Heart left ventricle (tissue), 16 donors: ENCODE measurements at regions of chr11 and their contacts with region 1.

Region 1: DNA sequence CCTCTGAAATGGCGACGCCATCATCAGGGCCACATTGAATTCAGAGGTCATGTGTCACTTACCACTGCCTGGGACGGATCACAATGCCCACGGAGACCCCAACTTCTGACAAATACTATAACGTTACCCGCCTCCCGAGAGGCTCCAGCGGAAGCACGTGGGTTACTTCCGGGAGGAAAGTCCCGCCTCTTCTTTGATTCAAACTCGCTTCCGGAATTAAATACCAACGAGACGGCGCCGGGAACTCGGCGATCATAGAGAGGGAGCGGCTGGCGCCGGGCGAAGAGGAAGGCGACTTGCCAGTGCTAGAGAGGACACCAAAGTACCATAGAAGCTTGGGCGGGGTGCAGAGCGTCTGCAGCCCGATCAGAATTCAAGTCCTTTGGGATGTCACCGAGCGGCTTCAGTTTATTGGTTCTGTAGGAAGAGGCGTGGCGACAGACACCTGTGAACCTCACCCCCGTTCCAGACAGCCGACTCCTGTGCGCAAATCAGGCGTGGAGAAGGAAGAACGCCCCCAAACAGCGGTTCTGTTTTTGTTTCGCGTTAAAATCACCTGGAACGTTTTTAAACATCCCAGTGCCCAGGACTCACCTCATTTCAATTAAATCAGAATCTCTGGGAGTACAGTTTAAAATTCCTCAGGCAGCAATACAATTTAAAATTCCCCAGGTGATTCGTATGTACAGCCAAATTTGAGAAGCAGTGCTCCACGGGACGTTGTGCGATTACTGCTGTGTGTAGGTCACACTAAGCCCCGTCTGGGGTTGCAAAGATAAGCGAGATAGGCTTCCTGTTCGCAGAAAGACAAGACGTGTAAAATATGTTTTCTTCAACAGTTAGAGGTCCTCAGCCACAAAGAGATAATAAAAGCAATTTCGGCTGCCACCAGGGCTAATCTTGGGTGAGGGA is at the start of gene TIMM10:
- DNase-seq: peak; percentile 94 to 97 (median 96)
- ATAC-seq: peak; percentile 97 to 99 (median 98)
- H3K4me3 ChIP-seq: peak within 1 kb of the TSS; percentile 55 to 91 (median 72)
- H3K27ac ChIP-seq: peak within 1 kb of the TSS in 11 of 12 donors; percentile 39 to 81 (median 73)
- H3K4me1 ChIP-seq: peaks cover 0 to 21% (median 11%) of the 10 kb centered on the region in 12 donors
- H3K27me3 ChIP-seq: no peaks in the 10 kb centered on the region
- CTCF ChIP-seq: no peak
- POLR2A ChIP-seq: peak in 1 of 2 donors; percentile 25
- total RNA-seq, gene TIMM10: 36.6 to 81.5 (median 46.4) TPM

Region 2: GRCh38 chr11:57335343-57336110 is 195.3 kb before region 1 on chr11 and contains the start of gene SSRP1:
- intact Hi-C with region 1: loop called in 2 of 10 experiments (anchors 5 kb)
- DNase-seq: peak; percentile 89 to 94 (median 93)
- ATAC-seq: peak; percentile 98 to 99 (median 98)
- H3K4me3 ChIP-seq: peak within 1 kb of the TSS; percentile 62 to 94 (median 84)
- H3K27ac ChIP-seq: peak within 1 kb of the TSS; percentile 70 to 96 (median 84)
- H3K4me1 ChIP-seq: peaks cover 0 to 25% (median 16%) of the 10 kb centered on the region in 12 donors
- H3K27me3 ChIP-seq: no peaks in the 10 kb centered on the region
- CTCF ChIP-seq: peak in 1 of 12 donors; percentile 24
- POLR2A ChIP-seq: peak in 1 of 2 donors; percentile 36
- total RNA-seq, gene SSRP1: 31.8 to 60.4 (median 41.6) TPM

Region 3: DNA sequence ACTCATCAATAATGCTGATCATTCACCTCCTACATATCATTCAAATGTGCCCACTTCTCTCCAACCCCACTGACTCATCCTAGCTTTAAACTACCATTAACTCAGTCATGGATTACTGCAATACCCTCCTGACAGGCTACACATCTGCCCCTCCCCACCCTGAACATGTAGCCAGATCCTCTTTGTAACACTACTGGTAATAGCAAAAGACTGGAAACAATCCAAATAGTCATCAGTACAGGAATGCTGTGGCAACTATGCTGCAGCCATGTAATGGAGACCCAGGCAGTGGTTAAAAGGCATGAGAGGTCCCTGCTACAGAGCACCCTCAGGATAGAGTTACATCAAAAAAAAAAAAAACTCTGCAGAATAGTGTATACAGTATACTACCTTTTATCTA is 120.6 kb before region 1 on chr11:
- intact Hi-C with region 1: no loop called
- DNase-seq: no peak
- ATAC-seq: no peak
- H3K4me3 ChIP-seq: no peak overlapping the region
- H3K27ac ChIP-seq: no peak overlapping the region
- H3K4me1 ChIP-seq: peaks cover 4 to 39% (median 28%) of the 10 kb centered on the region in 12 donors
- H3K27me3 ChIP-seq: no peaks in the 10 kb centered on the region
- CTCF ChIP-seq: no peak
- POLR2A ChIP-seq: no peak

Region 4: DNA sequence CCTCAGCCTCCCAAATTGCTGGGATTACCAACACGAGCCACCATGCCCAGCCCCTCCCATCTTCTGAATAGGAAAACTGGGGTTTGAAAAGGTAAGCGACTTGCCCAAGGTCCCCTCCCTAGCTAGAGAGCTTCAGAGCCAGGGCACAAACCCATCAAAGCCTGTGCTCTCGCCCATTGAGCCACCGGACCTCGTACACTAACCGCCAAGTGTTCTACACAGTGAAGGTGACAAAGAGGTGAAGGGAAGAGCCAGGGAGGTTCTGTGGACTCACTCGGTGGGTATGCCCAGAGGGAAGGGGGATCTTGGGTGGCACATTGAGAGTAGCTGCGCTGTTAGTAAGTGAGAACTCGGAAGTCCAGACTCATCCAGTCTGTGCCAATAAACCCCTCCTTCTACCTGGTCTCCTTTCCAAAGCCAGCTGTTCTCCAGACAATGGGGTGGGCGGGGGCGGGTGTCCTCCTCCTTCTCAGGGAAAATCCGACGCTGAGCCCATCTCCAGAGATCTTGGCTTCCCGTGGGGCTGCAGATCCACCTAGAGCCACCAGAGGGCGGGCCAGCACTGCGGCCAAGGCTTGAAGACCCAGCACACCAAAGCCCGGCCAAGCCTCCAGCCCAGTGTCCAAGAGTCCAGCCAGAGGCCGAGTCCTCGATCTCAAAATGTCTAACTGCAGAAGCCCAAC is 73.8 kb before region 1 on chr11:
- intact Hi-C with region 1: loop called in 9 of 10 experiments (anchors 1 to 5 kb)
- DNase-seq: peak; percentile 87 to 95 (median 89)
- ATAC-seq: peak; percentile 57 to 89 (median 86)
- H3K4me3 ChIP-seq: peak overlapping the region in 2 of 12 donors; percentile 4 to 19
- H3K27ac ChIP-seq: no peak overlapping the region
- H3K4me1 ChIP-seq: peaks cover 3 to 43% (median 25%) of the 10 kb centered on the region in 12 donors
- H3K27me3 ChIP-seq: peaks cover 9 to 47% (median 32%) of the 10 kb centered on the region in 9 donors
- CTCF ChIP-seq: peak; percentile 98 to 100 (median 98)
- POLR2A ChIP-seq: no peak

Region 5: DNA sequence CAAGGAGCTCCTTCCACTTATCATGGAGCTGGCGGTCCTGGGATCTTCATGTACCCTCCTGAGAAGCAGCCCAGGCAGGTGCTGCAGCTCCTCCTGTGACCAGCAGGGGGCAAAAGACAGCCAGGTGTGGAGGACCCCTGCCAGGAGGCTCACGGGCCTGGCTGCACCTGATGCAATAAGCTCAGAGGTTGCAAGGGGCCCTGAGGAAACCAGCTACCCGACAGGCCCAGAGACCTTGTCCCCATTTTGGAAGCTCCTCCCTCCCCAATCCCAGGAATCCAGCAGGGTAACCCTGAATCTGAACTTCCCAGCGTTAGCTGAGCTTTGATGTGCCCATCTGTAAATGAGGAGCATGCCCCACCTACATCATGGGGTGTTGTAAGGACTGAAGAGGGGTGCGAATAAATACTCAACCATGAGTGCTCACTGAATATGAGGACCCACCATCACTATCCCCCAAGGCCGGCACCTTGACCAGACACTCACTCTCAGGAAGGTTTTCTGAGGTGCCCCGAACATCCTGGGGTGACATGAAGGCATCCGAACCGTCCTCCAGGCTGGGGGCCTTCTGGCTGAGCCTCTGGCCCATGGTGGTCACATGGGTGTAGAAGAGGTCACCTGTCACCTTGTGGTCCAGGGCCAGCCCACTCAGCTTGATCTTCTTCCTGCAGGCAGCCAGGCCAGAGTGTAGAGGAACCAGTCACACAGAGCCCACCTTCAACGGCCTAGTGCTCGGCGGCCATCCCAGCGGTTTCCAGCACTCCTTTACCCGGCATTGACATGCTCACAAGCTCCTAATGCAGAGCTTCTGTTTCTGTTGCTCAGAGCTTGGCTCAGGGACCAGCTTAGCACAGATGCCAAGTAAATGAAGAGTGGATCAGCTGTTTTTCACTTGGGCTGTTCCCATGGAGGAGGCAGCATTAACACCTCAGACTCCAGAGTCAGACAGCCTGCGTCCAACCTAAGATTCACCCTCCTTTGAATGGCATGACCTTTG is 37.0 kb before region 1 on chr11:
- intact Hi-C with region 1: loop called (anchors 1 to 2 kb)
- DNase-seq: peak; percentile 39 to 81 (median 53)
- ATAC-seq: peak; percentile 52 to 65 (median 62)
- H3K4me3 ChIP-seq: no peak overlapping the region
- H3K27ac ChIP-seq: no peak overlapping the region
- H3K4me1 ChIP-seq: peaks cover 0 to 5% (median 3%) of the 10 kb centered on the region in 12 donors
- H3K27me3 ChIP-seq: no peaks in the 10 kb centered on the region
- CTCF ChIP-seq: peak; percentile 76 to 92 (median 88)
- POLR2A ChIP-seq: no peak

Region 6: DNA sequence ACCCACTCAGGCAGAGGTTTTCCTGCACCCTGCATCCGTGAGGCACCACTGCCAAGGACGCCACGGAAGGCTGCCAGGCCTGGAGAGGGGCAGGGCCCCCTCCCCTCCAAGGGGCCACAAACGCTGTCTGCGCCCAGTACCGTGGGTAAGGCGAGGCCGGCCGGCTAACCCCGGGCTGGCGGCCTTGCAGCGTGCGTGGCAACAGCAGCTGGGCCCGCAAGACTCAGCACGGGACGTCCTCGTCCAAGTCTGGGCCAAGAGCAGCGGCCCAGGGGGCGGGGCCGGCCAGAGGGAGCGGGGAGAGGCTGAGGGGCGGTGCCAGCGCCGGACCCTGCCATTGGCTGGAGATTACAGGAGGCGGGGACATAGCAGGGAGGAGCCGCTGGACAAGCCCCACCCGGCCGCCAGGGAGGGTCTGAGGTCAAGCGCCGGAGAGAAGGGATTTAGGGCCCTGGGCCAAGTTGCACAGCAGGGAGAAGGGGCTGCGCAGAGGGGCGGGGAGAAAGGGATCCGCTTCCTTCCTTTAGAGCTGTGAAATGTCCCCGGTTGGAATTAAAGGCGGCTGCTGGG is 31.4 kb before region 1 on chr11:
- intact Hi-C with region 1: loop called in 3 of 10 experiments (anchors 2 kb)
- DNase-seq: peak; percentile 98 to 99 (median 98)
- ATAC-seq: peak; percentile 99 to 100 (median 99)
- H3K4me3 ChIP-seq: peak overlapping the region in 10 of 12 donors; percentile 27 to 50 (median 42)
- H3K27ac ChIP-seq: peak overlapping the region; percentile 53 to 89 (median 81)
- H3K4me1 ChIP-seq: peaks cover 5 to 35% (median 20%) of the 10 kb centered on the region in 12 donors
- H3K27me3 ChIP-seq: no peaks in the 10 kb centered on the region
- CTCF ChIP-seq: no peak
- POLR2A ChIP-seq: peak in 1 of 2 donors; percentile 54

Region 7: DNA sequence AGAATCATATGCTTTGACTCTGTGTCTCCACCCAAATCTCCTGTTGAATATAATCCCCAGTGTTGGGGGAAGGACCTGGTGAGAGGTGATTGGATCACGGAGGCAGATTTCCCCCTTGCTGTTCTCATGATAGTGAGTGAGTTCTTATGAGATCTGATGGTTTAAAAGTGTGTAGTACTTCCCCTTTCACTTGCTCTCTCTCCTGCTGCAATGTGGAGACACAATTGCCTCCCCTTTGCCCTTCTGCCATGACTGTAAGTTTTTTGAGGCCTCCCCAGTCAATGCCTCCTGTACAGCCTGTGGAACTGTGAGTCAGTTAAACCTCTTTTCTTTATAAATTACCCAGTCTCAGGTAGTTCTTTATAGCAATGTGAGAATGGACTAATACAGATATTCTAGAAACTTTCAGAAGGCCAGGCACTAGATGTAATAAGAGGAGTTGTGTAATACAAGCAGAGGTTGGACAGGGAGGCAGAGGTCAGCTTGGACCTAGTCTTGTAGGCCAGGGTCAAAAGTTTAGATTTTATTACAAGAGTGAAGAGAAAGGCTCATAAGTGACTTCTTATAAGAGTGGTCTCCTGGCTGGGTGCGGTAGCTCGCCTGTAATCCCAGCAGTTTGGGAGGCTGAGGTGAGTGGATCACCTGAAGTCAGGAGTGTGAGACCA is 57.3 kb after region 1 on chr11:
- intact Hi-C with region 1: loop called in 1 of 10 experiments (anchors 10 kb)
- DNase-seq: no peak
- ATAC-seq: no peak
- H3K4me3 ChIP-seq: no peak overlapping the region
- H3K27ac ChIP-seq: no peak overlapping the region
- H3K4me1 ChIP-seq: peaks cover 0 to 5% (median 0%) of the 10 kb centered on the region in 12 donors
- H3K27me3 ChIP-seq: peaks cover 0 to 4% (median 0%) of the 10 kb centered on the region in 9 donors
- CTCF ChIP-seq: no peak
- POLR2A ChIP-seq: no peak

Region 8: DNA sequence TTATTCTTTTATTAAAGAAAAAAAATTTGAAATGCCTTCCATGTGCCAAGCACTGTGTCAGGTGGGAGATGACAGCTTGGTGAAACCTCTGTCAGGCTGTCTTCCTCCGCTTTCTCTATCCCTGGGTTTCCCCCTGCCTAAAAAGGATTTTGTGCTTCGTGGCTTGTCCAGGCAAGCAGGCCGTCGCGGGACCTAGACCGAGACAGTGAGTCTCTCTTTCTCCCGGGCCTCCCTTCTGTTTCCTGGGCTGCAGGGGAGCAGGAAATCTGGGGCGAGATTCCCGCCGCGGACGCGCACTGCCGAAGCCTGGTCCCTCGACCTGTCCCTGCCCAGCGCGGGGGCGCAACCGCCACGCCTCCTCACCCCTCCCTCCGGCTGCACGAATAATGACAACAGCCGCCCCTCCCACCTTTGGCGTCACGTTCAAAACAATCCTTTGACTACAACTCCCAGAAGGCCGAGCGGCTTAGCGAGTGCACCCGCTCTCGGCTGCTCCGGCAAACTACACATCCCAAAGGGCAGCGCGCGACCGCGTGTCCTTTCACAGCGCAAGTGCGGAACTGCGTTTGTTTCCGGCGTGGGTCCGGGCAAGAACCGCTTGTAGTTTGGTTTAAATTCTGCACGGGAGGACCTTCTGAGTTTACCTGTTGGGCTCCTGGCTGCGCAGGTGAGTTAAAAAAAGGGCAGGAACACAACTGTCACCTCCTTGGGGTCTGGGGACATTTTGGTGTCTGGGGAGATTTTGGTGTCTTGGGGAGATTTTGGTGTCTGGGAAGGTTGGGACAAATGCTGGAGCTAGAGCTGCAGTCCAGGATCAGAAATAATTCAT is 126.6 kb after region 1 on chr11 and contains the start of gene CLP1:
- intact Hi-C with region 1: loop called in 1 of 10 experiments (anchors 1 kb)
- DNase-seq: peak; percentile 99 to 100 (median 100)
- ATAC-seq: peak; percentile 99
- H3K4me3 ChIP-seq: peak within 1 kb of the TSS; percentile 28 to 92 (median 70)
- H3K27ac ChIP-seq: peak within 1 kb of the TSS; percentile 52 to 96 (median 87)
- H3K4me1 ChIP-seq: peaks cover 0 to 28% (median 15%) of the 10 kb centered on the region in 12 donors
- H3K27me3 ChIP-seq: no peaks in the 10 kb centered on the region
- CTCF ChIP-seq: peak in 1 of 12 donors; percentile 11
- POLR2A ChIP-seq: peak in 1 of 2 donors; percentile 80
- total RNA-seq, gene CLP1: 5.5 to 11.6 (median 8.2) TPM